Dorsolateral prefrontal cortex (tissue), 120 donors: ENCODE measurements at regions of chr12 and their contacts with region 1.

Region 1: GRCh38 chr12:74689071-74689655 is 151.5 kb downstream of the ATXN7L3B start:
- DNase-seq: no peak
- H3K4me3 ChIP-seq: peak overlapping the region in 4 of 59 donors; percentile 4 to 29 (median 18)
- H3K27ac ChIP-seq: no peak overlapping the region
- H3K27me3 ChIP-seq: no peaks in the 10 kb centered on the region
- CTCF ChIP-seq: peak; percentile 46 to 87 (median 69)

Region 2: GRCh38 chr12:74722709-74723108 is 33.5 kb after region 1 on chr12:
- intact Hi-C with region 1: no loop called
- DNase-seq: no peak
- H3K4me3 ChIP-seq: no peak overlapping the region
- H3K27ac ChIP-seq: no peak overlapping the region
- H3K27me3 ChIP-seq: no peaks in the 10 kb centered on the region
- CTCF ChIP-seq: no peak

Region 3: GRCh38 chr12:75289753-75290152 is 600.6 kb after region 1 on chr12:
- intact Hi-C with region 1: loop called (anchors 10 kb)
- DNase-seq: no peak
- H3K4me3 ChIP-seq: no peak overlapping the region
- H3K27ac ChIP-seq: no peak overlapping the region
- H3K27me3 ChIP-seq: no peaks in the 10 kb centered on the region
- CTCF ChIP-seq: peak in 54 of 56 donors; percentile 14 to 66 (median 44)

Region 4: DNA sequence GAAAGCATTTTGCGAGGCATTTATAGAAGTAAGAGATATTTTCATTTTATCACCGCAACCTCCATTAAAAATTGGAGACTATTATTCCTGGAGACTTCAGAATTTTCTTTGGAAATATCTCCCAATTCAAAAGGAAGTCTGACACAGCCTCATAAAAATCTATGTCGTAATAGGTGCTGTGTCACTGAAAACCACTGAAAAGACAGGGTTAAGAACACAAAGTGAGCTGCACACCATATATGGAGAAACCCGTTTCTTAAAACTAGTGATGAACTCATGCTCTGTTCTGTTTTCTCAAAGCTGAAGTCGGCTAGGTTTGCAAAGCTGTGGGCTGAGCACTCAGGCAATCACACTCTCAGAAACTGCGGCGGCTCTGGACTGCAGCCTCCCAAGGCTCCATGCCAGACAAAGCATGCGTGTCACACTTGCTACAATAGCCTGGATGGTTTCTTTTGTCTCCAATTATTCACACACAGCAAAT is 791.3 kb after region 1 on chr12 and contains the start of gene GLIPR1:
- intact Hi-C with region 1: loop called in 1 of 2 experiments (anchors 10 kb)
- DNase-seq: peak in 9 of 10 donors; percentile 37 to 79 (median 71)
- H3K4me3 ChIP-seq: peak within 1 kb of the TSS; percentile 10 to 76 (median 53)
- H3K27ac ChIP-seq: peak within 1 kb of the TSS in 50 of 59 donors; percentile 3 to 83 (median 57)
- H3K27me3 ChIP-seq: no peaks in the 10 kb centered on the region
- CTCF ChIP-seq: peak in 1 of 56 donors; percentile 12
- total RNA-seq, gene GLIPR1: 7.5 to 35.7 (median 20.7) TPM

Region 5: DNA sequence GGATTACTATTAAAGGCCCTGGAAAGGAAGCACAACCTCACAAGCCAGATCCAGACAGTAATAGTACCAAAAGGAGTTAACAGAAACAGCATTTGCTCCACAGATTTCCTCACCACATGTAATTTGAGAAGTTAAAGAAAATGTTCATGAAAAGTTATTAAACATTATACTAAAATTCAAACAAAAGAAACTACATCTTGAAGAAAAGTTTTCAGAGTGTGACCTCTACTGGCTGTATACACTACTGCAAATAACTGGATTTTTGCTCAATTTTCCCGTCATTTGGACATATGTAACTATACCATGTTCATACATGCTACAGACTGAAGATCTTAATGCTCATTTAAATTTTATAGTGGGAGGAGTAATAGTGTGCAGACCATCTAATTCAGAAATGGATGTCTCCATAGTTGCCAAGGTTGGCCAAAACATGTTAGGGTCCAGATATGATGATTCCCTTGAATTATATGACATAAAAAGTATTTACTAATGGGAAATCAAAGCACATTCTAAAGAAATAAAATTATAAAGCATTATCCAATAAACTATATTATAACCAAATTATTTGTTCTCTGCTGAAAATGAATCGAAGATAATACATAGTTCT is 816.6 kb after region 1 on chr12:
- intact Hi-C with region 1: loop called in 1 of 2 experiments (anchors 5 kb)
- DNase-seq: no peak
- H3K4me3 ChIP-seq: no peak overlapping the region
- H3K27ac ChIP-seq: no peak overlapping the region
- H3K27me3 ChIP-seq: no peaks in the 10 kb centered on the region
- CTCF ChIP-seq: peak; percentile 45 to 76 (median 62)